Heart right ventricle (tissue), 16 donors: ENCODE measurements at regions of chr15 and their contacts with region 1.

Region 1: GRCh38 chr15:95494971-95495541 is 835.4 kb upstream of the NR2F2 start:
- DNase-seq: peak in 1 of 2 donors; percentile 12
- ATAC-seq: peak in 3 of 8 donors; percentile 34 to 56 (median 49)
- H3K4me3 ChIP-seq: peak overlapping the region in 2 of 10 donors; percentile 5 to 7
- H3K27ac ChIP-seq: peak overlapping the region in 4 of 10 donors; percentile 7 to 57 (median 32)
- H3K4me1 ChIP-seq: peaks cover 0 to 28% (median 0%) of the 10 kb centered on the region in 9 donors
- H3K27me3 ChIP-seq: no peaks in the 10 kb centered on the region
- CTCF ChIP-seq: no peak

Region 2: GRCh38 chr15:95252404-95252803 is 242.7 kb before region 1 on chr15:
- intact Hi-C with region 1: no loop called
- DNase-seq: no peak
- ATAC-seq: no peak
- H3K4me3 ChIP-seq: no peak overlapping the region
- H3K27ac ChIP-seq: no peak overlapping the region
- H3K4me1 ChIP-seq: peaks cover 0 to 13% (median 0%) of the 10 kb centered on the region in 9 donors
- H3K27me3 ChIP-seq: peaks cover 0 to 3% (median 0%) of the 10 kb centered on the region in 7 donors
- CTCF ChIP-seq: no peak

Region 3: GRCh38 chr15:95266451-95267061 is 228.5 kb before region 1 on chr15:
- intact Hi-C with region 1: no loop called
- DNase-seq: peak in 1 of 2 donors; percentile 17
- ATAC-seq: peak in 5 of 8 donors; percentile 45 to 77 (median 71)
- H3K4me3 ChIP-seq: no peak overlapping the region
- H3K27ac ChIP-seq: peak overlapping the region in 9 of 10 donors; percentile 3 to 68 (median 26)
- H3K4me1 ChIP-seq: peaks cover 0 to 29% (median 4%) of the 10 kb centered on the region in 9 donors
- H3K27me3 ChIP-seq: peaks cover 0 to 4% (median 0%) of the 10 kb centered on the region in 7 donors
- CTCF ChIP-seq: no peak

Region 4: GRCh38 chr15:95557226-95558046 is 62.4 kb after region 1 on chr15:
- intact Hi-C with region 1: loop called in 1 of 10 experiments (anchors 10 kb)
- DNase-seq: no peak
- ATAC-seq: peak in 4 of 8 donors; percentile 82 to 89 (median 84)
- H3K4me3 ChIP-seq: no peak overlapping the region
- H3K27ac ChIP-seq: peak overlapping the region in 7 of 10 donors; percentile 9 to 74 (median 37)
- H3K4me1 ChIP-seq: peaks cover 0 to 25% (median 3%) of the 10 kb centered on the region in 9 donors
- H3K27me3 ChIP-seq: no peaks in the 10 kb centered on the region
- CTCF ChIP-seq: no peak

Region 5: DNA sequence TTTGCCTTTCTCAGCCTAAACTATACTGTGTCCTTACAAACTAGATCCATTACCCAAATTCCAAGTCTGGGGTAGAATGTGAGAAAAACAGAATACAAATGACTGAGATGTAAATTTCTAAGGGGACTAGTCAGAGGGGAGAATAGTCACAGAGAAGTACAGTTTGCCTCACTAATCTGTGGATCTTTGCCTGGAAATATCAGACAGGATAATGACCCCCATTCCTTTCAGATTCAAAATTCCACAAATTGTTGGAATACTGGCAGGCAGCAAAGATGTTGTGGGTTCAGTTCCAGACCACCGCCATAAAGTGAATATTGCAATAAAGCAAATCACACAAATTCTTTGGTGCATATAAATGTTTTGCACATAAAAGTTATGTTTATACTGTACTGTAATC is 72.6 kb after region 1 on chr15:
- intact Hi-C with region 1: no loop called
- DNase-seq: no peak
- ATAC-seq: no peak
- H3K4me3 ChIP-seq: no peak overlapping the region
- H3K27ac ChIP-seq: no peak overlapping the region
- H3K4me1 ChIP-seq: no peaks in the 10 kb centered on the region
- H3K27me3 ChIP-seq: no peaks in the 10 kb centered on the region
- CTCF ChIP-seq: no peak

Region 6: GRCh38 chr15:95894367-95894962 is 399.4 kb after region 1 on chr15:
- intact Hi-C with region 1: no loop called
- DNase-seq: no peak
- ATAC-seq: no peak
- H3K4me3 ChIP-seq: no peak overlapping the region
- H3K27ac ChIP-seq: no peak overlapping the region
- H3K4me1 ChIP-seq: no peaks in the 10 kb centered on the region
- H3K27me3 ChIP-seq: no peaks in the 10 kb centered on the region
- CTCF ChIP-seq: no peak